ENCODE measurements at regions of chr4 and their contacts with region 1.

Region 1: DNA sequence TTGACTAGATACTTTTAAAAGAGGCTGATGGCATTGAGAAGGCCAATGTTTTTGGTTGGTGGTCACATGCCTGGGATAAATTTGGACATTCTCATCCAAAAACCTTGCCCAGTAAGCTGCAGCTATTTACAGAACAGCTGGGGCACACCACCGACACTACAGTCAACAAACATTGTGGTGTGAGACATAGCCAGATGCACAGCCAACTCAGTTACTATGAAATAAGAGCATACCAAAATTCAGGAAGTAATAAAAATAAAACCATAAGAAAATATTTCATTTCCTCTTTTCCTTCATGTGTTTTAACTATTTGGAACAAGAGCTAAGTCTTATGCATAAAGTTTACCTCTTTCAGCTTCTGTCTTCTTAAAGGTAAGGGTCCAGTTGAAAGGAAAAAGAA is 8.8 kb downstream of the PPM1K start:
- DNase-seq: no peak
- H3K4me3 ChIP-seq: no peak overlapping the region
- H3K27ac ChIP-seq: no peak overlapping the region
- H3K4me1 ChIP-seq: no peaks in the 10 kb centered on the region
- H3K27me3 ChIP-seq: no peaks in the 10 kb centered on the region
- CTCF ChIP-seq: no peak

Region 2: DNA sequence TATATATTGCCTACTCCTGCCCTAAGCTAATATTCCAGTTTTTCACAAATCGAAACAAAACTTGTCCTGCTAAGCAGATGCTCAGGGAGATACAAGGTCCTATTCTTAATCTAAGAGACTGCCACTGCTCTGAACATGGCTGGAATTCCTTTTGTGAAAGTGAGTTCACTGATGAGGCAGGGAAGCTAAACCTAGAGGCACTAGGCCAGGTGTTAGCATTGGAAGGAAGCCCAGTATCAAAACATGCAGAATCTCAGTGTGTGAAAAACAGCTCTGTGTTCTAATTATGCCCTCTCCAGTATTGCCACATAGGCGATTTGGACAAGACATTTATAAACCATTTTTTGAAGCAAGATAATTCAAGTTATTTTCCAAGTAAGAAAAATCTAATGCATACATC is 164.7 kb before region 1 on chr4:
- CTCF ChIA-PET with region 1: no interaction called
- dilution Hi-C with region 1: no loop called
- in situ Hi-C with region 1: no loop called
- intact Hi-C with region 1: no loop called
- DNase-seq: peak; percentile 43
- H3K4me3 ChIP-seq: no peak overlapping the region
- H3K27ac ChIP-seq: no peak overlapping the region
- H3K4me1 ChIP-seq: peaks cover 16% of the 10 kb centered on the region
- H3K27me3 ChIP-seq: no peaks in the 10 kb centered on the region
- CTCF ChIP-seq: no peak

Region 3: DNA sequence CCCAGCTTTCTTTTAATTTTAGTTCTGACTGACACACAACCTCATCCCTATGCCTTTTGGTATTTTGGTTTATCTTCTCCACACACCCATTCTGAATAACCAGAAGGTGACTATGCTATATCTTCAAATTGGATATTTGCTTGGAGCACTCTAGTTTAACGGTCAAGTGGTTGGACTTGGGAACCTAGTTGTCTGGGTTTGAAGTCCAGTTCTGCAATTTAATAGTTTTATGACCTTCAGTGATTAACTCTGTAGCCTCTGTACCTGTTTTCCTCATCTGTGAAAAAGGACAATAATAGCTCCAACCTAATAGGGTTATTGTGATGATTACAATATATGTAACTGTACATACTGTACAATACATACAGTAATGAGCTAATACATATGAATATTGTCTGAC is 11.2 kb before region 1 on chr4:
- CTCF ChIA-PET with region 1: no interaction called
- dilution Hi-C with region 1: no loop called
- in situ Hi-C with region 1: no loop called
- intact Hi-C with region 1: no loop called
- DNase-seq: no peak
- H3K4me3 ChIP-seq: no peak overlapping the region
- H3K27ac ChIP-seq: no peak overlapping the region
- H3K4me1 ChIP-seq: no peaks in the 10 kb centered on the region
- H3K27me3 ChIP-seq: no peaks in the 10 kb centered on the region
- CTCF ChIP-seq: no peak

Region 4: DNA sequence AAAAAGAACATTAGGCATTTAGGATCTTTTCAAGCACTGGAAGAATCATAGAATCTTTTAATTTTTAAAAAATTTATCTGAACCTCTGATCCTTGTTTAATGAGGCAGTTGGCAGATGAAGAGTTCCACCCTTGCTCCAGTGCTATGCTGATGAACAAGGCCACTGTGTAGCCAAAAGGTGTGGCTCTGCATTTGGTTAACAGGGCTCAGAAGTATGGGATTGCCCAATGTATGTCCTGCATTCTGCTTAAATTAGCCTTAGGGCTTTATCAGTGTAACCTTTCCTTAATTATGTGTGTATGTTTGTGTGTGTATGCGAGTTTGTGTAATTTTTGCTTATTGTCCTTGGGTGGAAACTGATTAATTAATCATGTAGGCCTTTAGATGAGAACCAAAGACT is 52.1 kb after region 1 on chr4:
- CTCF ChIA-PET with region 1: no interaction called
- dilution Hi-C with region 1: loop called (anchors 5 kb)
- in situ Hi-C with region 1: no loop called
- intact Hi-C with region 1: no loop called
- DNase-seq: peak; percentile 38
- H3K4me3 ChIP-seq: no peak overlapping the region
- H3K27ac ChIP-seq: no peak overlapping the region
- H3K4me1 ChIP-seq: peaks cover 6% of the 10 kb centered on the region
- H3K27me3 ChIP-seq: no peaks in the 10 kb centered on the region
- CTCF ChIP-seq: no peak

Region 5: DNA sequence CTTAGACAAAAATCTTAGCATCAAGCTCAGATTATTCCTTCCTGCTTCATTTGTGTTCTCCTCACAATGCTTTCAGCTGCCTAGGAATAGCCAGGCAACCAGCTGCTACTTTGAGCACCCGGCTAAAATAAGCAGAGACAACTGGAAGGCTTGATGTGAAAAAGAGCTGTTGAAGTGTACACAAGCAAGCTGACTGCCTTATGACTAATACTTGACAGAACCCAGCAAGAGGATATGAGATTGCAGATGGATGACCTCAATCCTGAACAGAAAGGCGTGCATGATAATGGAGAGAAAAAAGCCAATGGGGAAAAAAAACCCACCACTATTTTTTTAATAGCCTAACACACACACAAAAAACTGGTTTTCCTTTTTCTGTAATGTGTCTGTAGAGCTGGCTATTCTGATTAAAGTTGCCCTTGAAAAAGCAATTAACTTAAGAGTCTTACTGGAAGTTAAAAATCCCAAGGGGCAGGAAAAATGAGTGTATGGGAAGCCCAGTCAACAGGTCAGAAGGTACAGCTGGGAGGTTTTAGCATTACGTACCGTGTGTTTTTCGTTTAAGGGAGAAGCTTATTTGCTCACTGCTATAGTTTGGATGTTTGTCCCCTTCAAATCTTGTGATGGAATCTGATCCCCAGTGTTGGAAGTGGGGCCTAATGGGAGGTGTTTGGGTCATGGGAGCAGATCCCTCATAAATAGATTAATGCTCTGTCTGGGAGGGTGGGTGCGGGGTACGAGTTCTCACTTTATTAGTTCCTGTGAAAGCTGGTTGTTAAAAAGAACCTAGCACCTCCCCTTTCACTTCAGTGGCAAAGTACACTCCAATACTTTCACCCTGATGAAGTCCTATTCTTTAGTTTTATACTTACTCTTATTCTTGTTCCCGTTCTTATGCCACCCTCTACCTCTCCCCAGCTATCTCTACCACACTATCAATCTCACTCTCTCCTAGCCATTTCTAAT is 66.0 kb after region 1 on chr4:
- CTCF ChIA-PET with region 1: no interaction called
- dilution Hi-C with region 1: no loop called
- in situ Hi-C with region 1: no loop called
- intact Hi-C with region 1: no loop called
- DNase-seq: peak; percentile 77
- H3K4me3 ChIP-seq: no peak overlapping the region
- H3K27ac ChIP-seq: no peak overlapping the region
- H3K4me1 ChIP-seq: peaks cover 14% of the 10 kb centered on the region
- H3K27me3 ChIP-seq: no peaks in the 10 kb centered on the region
- CTCF ChIP-seq: no peak

Region 6: GRCh38 chr4:88360256-88360655 is 84.7 kb after region 1 on chr4:
- CTCF ChIA-PET with region 1: no interaction called
- dilution Hi-C with region 1: loop called (anchors 5 kb)
- in situ Hi-C with region 1: no loop called
- intact Hi-C with region 1: loop called (anchors 5 kb)
- DNase-seq: no peak
- H3K4me3 ChIP-seq: no peak overlapping the region
- H3K27ac ChIP-seq: no peak overlapping the region
- H3K4me1 ChIP-seq: no peaks in the 10 kb centered on the region
- H3K27me3 ChIP-seq: no peaks in the 10 kb centered on the region
- CTCF ChIP-seq: no peak